ENCODE measurements at regions of chr10 and their contacts with region 1.

Region 1: GRCh38 chr10:119686439-119687191 is 35.4 kb downstream of the BAG3 start:
- DNase-seq: peak; percentile 88 to 94 (median 90)
- H3K4me3 ChIP-seq: peak overlapping the region in 2 of 3 experiments; percentile 25 to 63
- H3K4me3 Mint-ChIP-seq: peak overlapping the region; percentile 73 to 84
- H3K27ac ChIP-seq: no peak overlapping the region
- H3K27ac Mint-ChIP-seq: peak overlapping the region in 6 of 7 donors; percentile 40 to 80 (median 66)
- H3K4me1 ChIP-seq: peaks cover 23 to 27% of the 10 kb centered on the region in 2 donors
- H3K4me1 Mint-ChIP-seq: peaks cover 28% of the 10 kb centered on the region
- H3K27me3 ChIP-seq: no peaks in the 10 kb centered on the region
- H3K27me3 Mint-ChIP-seq: peaks cover 1 to 7% (median 5%) of the 10 kb centered on the region in 3 donors
- CTCF ChIP-seq: peak; percentile 95

Region 2: DNA sequence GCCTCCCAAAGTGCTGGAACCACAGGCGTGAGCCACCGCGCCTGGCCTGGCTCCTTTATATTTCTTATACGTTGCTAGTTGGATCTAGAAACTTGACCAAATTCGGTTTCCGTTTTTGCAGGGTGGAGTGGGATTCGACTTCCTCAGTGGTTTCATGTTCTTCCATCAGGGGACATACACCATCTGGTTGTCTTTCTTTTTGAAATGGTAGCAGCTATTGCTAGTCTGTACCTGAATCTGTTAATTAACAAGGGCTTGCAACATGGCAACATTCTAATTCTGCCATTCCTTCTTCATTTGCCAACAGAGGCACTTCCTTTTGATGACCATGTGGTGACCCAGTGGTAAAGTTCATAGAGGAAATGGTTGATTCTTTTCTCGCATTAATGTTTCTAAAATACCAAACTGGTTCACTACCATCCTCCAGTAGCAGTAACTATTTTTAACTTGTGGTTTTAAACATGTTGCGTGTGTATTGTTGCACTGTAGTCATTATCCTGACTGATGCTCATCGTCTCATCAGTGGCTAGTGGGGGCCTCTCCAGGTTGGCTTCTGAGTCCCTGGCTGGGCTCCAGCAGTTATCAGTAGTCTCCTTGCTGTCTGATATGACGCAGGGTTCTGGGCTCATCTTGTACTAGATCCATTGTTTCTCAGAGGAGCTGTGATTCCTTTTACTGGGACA is 303.3 kb before region 1 on chr10:
- intact Hi-C with region 1: no loop called
- DNase-seq: peak in 2 of 3 donors; percentile 10 to 26
- H3K4me3 ChIP-seq: no peak overlapping the region
- H3K4me3 Mint-ChIP-seq: no peak overlapping the region
- H3K27ac ChIP-seq: peak overlapping the region; percentile 40 to 58
- H3K27ac Mint-ChIP-seq: peak overlapping the region; percentile 26 to 87 (median 64)
- H3K4me1 ChIP-seq: peaks cover 16 to 20% of the 10 kb centered on the region in 2 donors
- H3K4me1 Mint-ChIP-seq: peaks cover 26% of the 10 kb centered on the region
- H3K27me3 ChIP-seq: no peaks in the 10 kb centered on the region
- H3K27me3 Mint-ChIP-seq: peaks cover 1 to 5% (median 4%) of the 10 kb centered on the region in 3 donors
- CTCF ChIP-seq: no peak

Region 3: GRCh38 chr10:119650692-119651513 is 35.7 kb before region 1 on chr10 and contains the start of gene BAG3:
- intact Hi-C with region 1: loop called in 1 of 2 experiments (anchors 5 kb)
- DNase-seq: peak; percentile 83 to 88 (median 87)
- H3K4me3 ChIP-seq: peak within 1 kb of the TSS; percentile 75 to 92 (median 80)
- H3K4me3 Mint-ChIP-seq: peak within 1 kb of the TSS; percentile 96 to 97
- H3K27ac ChIP-seq: peak within 1 kb of the TSS; percentile 23 to 73
- H3K27ac Mint-ChIP-seq: peak within 1 kb of the TSS in 6 of 7 donors; percentile 59 to 90 (median 87)
- H3K4me1 ChIP-seq: peaks cover 8 to 30% of the 10 kb centered on the region in 2 donors
- H3K4me1 Mint-ChIP-seq: peaks cover 32% of the 10 kb centered on the region
- H3K27me3 ChIP-seq: peaks cover 5 to 19% of the 10 kb centered on the region in 2 donors
- H3K27me3 Mint-ChIP-seq: peaks cover 25 to 39% (median 34%) of the 10 kb centered on the region in 3 donors
- CTCF ChIP-seq: no peak
- polyA plus RNA-seq, gene BAG3: 1.0 to 10.2 (median 2.8) TPM

Region 4: GRCh38 chr10:119725828-119726675 is 39.4 kb after region 1 on chr10 and contains the start of gene INPP5F:
- intact Hi-C with region 1: loop called in 1 of 2 experiments (anchors 1 kb)
- DNase-seq: peak; percentile 96 to 99 (median 96)
- H3K4me3 ChIP-seq: peak within 1 kb of the TSS; percentile 69 to 84 (median 83)
- H3K4me3 Mint-ChIP-seq: peak within 1 kb of the TSS; percentile 84 to 94
- H3K27ac ChIP-seq: peak within 1 kb of the TSS; percentile 90 to 92
- H3K27ac Mint-ChIP-seq: peak within 1 kb of the TSS; percentile 88 to 98 (median 95)
- H3K4me1 ChIP-seq: peaks cover 30 to 35% of the 10 kb centered on the region in 2 donors
- H3K4me1 Mint-ChIP-seq: peaks cover 38% of the 10 kb centered on the region
- H3K27me3 ChIP-seq: no peaks in the 10 kb centered on the region
- H3K27me3 Mint-ChIP-seq: peaks cover 0 to 3% (median 2%) of the 10 kb centered on the region in 3 donors
- CTCF ChIP-seq: peak; percentile 32
- polyA plus RNA-seq, gene INPP5F: 5.1 to 6.9 (median 5.4) TPM

Region 5: DNA sequence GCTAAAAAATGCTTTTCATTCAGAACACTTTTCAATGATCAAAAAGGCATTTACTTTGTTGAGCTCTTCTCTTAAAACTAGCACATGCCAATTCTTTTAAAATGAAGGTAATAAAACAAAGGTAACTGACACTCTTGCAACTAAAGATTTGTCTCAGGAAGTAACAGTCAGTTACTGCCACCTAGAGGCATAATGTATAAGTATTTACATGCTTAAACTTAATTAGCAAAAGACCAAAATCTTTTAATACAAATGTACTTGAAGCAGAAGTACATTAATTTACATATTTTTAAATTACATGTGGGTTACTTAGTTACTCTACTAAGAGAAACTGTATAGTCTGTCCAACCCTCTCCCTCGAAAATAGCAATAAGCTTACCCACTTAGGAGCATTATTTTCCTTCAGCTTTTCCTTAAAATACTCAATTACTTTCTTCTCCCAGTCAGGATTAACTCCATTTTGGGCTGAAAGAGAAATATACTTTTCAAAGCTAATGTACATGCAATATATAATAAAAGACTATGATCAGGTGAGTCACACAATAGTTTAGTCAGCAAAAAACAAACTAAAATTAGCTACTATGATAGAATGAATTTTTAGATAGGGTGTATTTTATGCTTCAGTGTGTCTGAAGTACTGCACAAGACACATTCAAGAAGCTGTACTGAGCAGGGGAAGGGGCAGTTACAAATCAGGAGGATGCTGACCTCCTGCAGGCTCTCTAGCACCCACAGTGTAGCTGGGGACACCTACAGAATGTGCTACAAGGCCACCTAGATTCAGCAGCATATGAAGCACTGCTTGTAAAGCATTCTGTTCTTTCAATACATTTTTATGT is 173.0 kb after region 1 on chr10:
- intact Hi-C with region 1: loop called (anchors 5 to 10 kb)
- DNase-seq: peak; percentile 15 to 67 (median 43)
- H3K4me3 ChIP-seq: no peak overlapping the region
- H3K4me3 Mint-ChIP-seq: no peak overlapping the region
- H3K27ac ChIP-seq: peak overlapping the region in 1 of 2 donors; percentile 45
- H3K27ac Mint-ChIP-seq: peak overlapping the region in 5 of 7 donors; percentile 9 to 61 (median 41)
- H3K4me1 ChIP-seq: no peaks in the 10 kb centered on the region
- H3K4me1 Mint-ChIP-seq: peaks cover 23% of the 10 kb centered on the region
- H3K27me3 ChIP-seq: no peaks in the 10 kb centered on the region
- H3K27me3 Mint-ChIP-seq: no peaks in the 10 kb centered on the region
- CTCF ChIP-seq: peak; percentile 79

Measured in CD14-positive monocyte (primary cell).